ENCODE measurements at regions of chrX and their contacts with region 1.

Region 1: DNA sequence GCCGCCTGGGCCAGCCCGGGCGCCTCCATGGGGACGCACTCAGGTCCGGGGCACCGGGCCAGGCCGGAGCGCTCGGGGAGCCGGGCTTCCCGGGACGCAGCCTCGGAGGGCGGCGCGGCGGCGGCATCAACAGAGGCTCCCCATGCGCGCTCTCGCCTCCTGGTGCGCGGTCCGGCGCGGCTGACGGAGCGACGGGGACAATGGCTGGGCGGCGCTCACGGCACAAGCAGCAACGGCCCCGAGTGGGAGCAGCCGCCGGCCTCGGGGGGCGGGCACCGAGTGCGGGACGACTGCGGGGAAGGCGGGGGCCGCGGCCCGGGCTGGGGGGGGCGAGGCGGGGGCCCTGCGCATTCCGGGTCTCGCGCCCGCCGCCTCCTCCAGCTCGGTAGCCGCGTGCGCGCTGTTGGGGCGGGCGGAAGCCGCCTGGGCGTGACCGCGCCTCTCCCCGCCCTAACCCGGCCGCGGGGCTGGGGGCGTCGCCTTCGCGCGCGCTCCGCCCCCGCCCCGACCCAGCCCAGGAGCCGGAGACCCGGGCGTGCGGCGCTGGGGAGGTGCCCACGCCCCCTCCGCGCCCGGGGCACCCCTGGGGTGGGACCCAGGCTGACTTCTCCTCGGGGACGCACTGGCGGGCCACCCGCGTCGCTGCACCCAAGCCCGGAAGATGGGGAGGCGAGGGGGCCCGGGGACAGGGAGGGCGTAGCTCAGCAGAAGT is at the start of gene PRKX:
- DNase-seq: peak; percentile 74
- H3K4me3 Mint-ChIP-seq: peak within 1 kb of the TSS; percentile 96
- H3K27ac Mint-ChIP-seq: peak within 1 kb of the TSS; percentile 95
- H3K4me1 Mint-ChIP-seq: peaks cover 11% of the 10 kb centered on the region
- H3K27me3 Mint-ChIP-seq: no peaks in the 10 kb centered on the region
- total RNA-seq, gene PRKX: 89.5 to 90.9 TPM

Region 2: GRCh38 chrX:3403748-3404147 is 309.6 kb before region 1 on chrX:
- CTCF ChIA-PET with region 1: no interaction called
- POLR2A ChIA-PET with region 1: no interaction called
- intact Hi-C with region 1: no loop called
- DNase-seq: no peak
- H3K4me3 Mint-ChIP-seq: no peak overlapping the region
- H3K27ac Mint-ChIP-seq: no peak overlapping the region
- H3K4me1 Mint-ChIP-seq: no peaks in the 10 kb centered on the region
- H3K27me3 Mint-ChIP-seq: no peaks in the 10 kb centered on the region

Region 3: GRCh38 chrX:3589474-3589873 is 123.9 kb before region 1 on chrX:
- CTCF ChIA-PET with region 1: no interaction called
- POLR2A ChIA-PET with region 1: no interaction called
- intact Hi-C with region 1: no loop called
- DNase-seq: no peak
- H3K4me3 Mint-ChIP-seq: no peak overlapping the region
- H3K27ac Mint-ChIP-seq: no peak overlapping the region
- H3K4me1 Mint-ChIP-seq: peaks cover 10% of the 10 kb centered on the region
- H3K27me3 Mint-ChIP-seq: no peaks in the 10 kb centered on the region

Region 4: DNA sequence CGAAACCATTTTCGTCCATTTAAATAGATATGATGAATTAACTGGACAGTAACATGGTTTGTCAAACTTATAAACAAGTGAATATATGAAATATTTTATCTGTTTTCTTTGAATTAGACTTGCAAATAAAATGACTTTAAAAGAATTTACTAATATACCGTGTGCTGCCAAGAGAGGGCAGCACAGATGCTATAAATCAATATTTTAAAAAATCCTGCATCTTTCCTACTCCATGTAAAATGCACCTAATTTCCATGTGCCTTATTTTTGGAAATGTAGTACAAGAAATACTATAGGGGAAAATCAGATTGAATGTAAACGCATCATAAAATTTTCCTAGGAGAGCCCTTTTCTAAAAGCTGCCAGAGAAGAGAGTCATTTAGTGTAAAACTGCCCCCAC is 62.1 kb before region 1 on chrX:
- CTCF ChIA-PET with region 1: interaction called, 4 read pairs
- POLR2A ChIA-PET with region 1: no interaction called
- intact Hi-C with region 1: loop called (anchors 2 kb)
- DNase-seq: no peak
- H3K4me3 Mint-ChIP-seq: no peak overlapping the region
- H3K27ac Mint-ChIP-seq: peak overlapping the region; percentile 39
- H3K4me1 Mint-ChIP-seq: peaks cover 6% of the 10 kb centered on the region
- H3K27me3 Mint-ChIP-seq: no peaks in the 10 kb centered on the region

Region 5: DNA sequence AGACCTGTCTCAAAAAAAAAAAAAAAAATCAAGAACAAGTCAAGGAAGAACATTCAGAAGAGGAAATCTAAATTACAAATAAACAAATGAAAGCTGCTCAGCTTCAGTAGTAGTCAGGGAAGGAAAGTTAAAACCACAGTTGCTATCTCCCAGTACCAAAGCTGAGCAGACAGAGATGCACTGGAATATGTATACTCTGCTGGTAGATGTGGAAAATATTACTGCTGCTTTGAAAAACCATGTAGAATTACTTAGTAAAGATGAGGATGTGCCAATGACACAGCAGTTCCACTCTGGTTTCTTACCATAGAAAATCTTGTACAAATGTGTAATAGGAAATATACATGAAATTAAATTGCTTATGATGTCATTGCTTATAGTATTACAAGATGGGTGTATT is 25.1 kb after region 1 on chrX:
- CTCF ChIA-PET with region 1: no interaction called
- POLR2A ChIA-PET with region 1: interaction called, 5 read pairs
- intact Hi-C with region 1: loop called (anchors 1 kb)
- DNase-seq: no peak
- H3K4me3 Mint-ChIP-seq: no peak overlapping the region
- H3K27ac Mint-ChIP-seq: peak overlapping the region; percentile 91
- H3K4me1 Mint-ChIP-seq: peaks cover 34% of the 10 kb centered on the region
- H3K27me3 Mint-ChIP-seq: no peaks in the 10 kb centered on the region

Region 6: DNA sequence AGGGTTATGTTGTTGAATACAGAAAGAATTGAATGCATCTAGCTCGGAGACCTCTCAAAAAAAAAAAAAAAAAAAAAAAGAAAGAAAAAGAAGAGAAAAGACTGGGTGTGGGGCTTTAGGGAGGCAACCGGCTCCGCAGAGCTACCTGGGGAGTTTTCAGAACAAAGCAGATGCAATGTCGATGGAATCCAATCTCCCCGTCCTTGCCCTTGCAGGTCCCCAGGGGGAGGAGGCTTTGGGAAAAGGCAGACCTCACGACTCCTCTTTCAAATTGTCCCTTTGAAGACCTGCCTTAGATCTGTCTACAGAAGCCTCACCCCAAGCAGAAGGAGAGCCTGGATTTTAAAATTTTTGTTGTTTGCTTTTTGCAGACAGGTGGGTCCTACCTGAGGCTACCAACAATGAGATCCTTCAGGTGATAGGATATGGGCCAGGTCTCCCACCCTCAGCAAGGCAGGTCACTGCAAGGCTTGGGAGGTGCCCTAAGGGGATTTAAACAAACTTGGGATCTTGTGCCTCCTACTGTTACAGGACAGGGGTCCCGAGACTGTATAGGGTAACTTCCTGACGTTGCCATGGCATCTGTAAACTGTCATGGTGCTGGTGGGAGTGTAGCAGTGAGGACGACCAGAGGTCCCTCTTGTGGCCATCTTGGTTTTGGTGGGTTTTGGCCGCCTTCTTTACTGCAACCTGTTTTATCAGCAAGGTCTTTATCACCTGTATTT is 75.3 kb after region 1 on chrX:
- CTCF ChIA-PET with region 1: interaction called, 3 read pairs
- POLR2A ChIA-PET with region 1: no interaction called
- intact Hi-C with region 1: loop called (anchors 10 kb)
- DNase-seq: peak; percentile 25
- H3K4me3 Mint-ChIP-seq: no peak overlapping the region
- H3K27ac Mint-ChIP-seq: no peak overlapping the region
- H3K4me1 Mint-ChIP-seq: peaks cover 3% of the 10 kb centered on the region
- H3K27me3 Mint-ChIP-seq: no peaks in the 10 kb centered on the region